Sigmoid colon (tissue), 7 donors: ENCODE measurements at regions of chr4 and their contacts with region 1.

Region 1: DNA sequence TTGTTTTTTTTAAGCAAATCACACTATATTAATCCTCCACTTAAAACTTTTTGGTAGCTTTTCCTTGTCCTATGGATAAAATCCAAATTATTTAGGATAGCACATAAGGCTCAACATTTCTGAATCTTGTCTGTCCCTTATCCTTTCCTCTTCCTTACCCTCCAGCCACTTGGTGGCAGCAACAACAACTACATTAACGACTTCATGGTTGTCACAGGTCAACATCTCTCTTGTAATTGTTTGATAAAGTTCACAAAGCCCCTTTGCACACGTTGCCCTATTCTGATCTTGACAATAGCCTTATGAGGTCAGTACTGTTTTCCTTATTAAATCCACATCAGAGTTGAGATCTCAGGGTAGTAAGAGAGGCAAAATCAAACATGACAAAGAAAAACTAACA is 269.0 kb upstream of the PABPC4L start:
- DNase-seq: no peak
- H3K4me3 ChIP-seq: no peak overlapping the region
- H3K27ac ChIP-seq: no peak overlapping the region
- H3K4me1 ChIP-seq: no peaks in the 10 kb centered on the region
- H3K27me3 ChIP-seq: no peaks in the 10 kb centered on the region
- CTCF ChIP-seq: peak in 3 of 4 experiments; percentile 24 to 33 (median 25)
- EP300 ChIP-seq: no peak
- POLR2A ChIP-seq: no peak

Region 2: DNA sequence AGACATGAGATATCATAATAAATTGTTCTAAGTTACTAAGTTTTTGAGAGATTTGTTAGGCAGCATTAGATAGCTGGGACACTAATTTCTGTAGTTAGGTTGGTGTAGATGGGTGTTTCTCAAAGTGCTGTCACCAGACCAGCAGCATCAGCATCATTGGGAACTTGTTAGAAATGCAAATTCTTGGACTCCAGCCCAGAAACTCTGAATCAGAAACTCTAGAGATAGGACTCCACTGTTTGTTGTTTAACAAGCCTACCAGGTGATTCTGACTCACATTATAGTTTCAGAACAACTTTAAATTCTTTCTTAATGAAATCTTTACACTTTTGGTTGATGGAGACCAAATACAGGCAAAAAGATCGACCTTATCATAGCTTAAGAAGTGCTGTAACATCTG is 442.6 kb before region 1 on chr4:
- intact Hi-C with region 1: no loop called
- DNase-seq: no peak
- H3K4me3 ChIP-seq: no peak overlapping the region
- H3K27ac ChIP-seq: no peak overlapping the region
- H3K4me1 ChIP-seq: no peaks in the 10 kb centered on the region
- H3K27me3 ChIP-seq: no peaks in the 10 kb centered on the region
- CTCF ChIP-seq: no peak
- EP300 ChIP-seq: no peak
- POLR2A ChIP-seq: no peak

Region 3: GRCh38 chr4:134320048-134320447 is 150.5 kb before region 1 on chr4:
- intact Hi-C with region 1: no loop called
- DNase-seq: no peak
- H3K4me3 ChIP-seq: no peak overlapping the region
- H3K27ac ChIP-seq: no peak overlapping the region
- H3K4me1 ChIP-seq: no peaks in the 10 kb centered on the region
- H3K27me3 ChIP-seq: no peaks in the 10 kb centered on the region
- CTCF ChIP-seq: no peak
- EP300 ChIP-seq: no peak
- POLR2A ChIP-seq: no peak

Region 4: GRCh38 chr4:134777606-134778005 is 307.1 kb after region 1 on chr4:
- intact Hi-C with region 1: loop called (anchors 5 kb)
- DNase-seq: no peak
- H3K4me3 ChIP-seq: no peak overlapping the region
- H3K27ac ChIP-seq: no peak overlapping the region
- H3K4me1 ChIP-seq: no peaks in the 10 kb centered on the region
- H3K27me3 ChIP-seq: no peaks in the 10 kb centered on the region
- CTCF ChIP-seq: peak in 1 of 4 experiments; percentile 35
- EP300 ChIP-seq: no peak
- POLR2A ChIP-seq: no peak

Region 5: DNA sequence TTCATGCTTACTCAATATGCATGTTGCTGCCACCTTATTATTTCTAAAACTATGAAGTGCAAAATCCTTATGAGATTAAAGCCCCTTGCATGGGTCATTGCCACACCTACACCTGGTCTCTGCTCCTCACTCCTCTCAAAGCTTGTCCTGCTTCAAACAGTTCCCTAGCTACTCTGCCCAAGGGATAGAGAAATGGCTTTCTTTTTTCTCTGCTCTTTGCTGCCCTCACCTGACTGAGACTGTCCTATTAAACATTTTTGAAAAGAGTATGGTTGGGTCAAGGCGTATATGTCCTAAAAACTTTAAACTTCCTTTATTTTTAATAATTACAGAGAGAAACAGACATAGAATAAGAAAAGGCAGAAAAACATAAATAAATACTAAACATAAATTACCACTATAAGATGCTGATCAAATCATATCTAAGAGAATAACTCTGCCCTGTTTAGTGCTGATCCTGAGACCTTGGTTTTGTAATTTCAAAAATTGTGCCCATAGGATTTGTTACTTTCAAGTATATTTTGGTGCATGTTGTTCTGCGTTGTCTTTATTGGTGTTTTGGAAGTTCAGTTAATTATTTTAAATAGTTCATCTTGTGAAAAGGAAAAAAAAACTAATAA is 436.0 kb after region 1 on chr4:
- intact Hi-C with region 1: loop called (anchors 10 kb)
- DNase-seq: no peak
- H3K4me3 ChIP-seq: no peak overlapping the region
- H3K27ac ChIP-seq: no peak overlapping the region
- H3K4me1 ChIP-seq: no peaks in the 10 kb centered on the region
- H3K27me3 ChIP-seq: no peaks in the 10 kb centered on the region
- CTCF ChIP-seq: peak in 2 of 4 experiments; percentile 12 to 41
- EP300 ChIP-seq: no peak
- POLR2A ChIP-seq: no peak